ENCODE measurements at regions of chr7 and their contacts with region 1.

Region 1: GRCh38 chr7:20310963-20311742 is 19.5 kb upstream of the ITGB8 start:
- DNase-seq: no peak
- H3K4me3 ChIP-seq: no peak overlapping the region
- H3K27ac ChIP-seq: no peak overlapping the region
- H3K4me1 ChIP-seq: peaks cover 3% of the 10 kb centered on the region
- H3K27me3 ChIP-seq: no peaks in the 10 kb centered on the region
- CTCF ChIP-seq: peak; percentile 44

Region 2: GRCh38 chr7:19713676-19714075 is 597.5 kb before region 1 on chr7:
- intact Hi-C with region 1: loop called (anchors 10 kb)
- DNase-seq: no peak
- H3K4me3 ChIP-seq: no peak overlapping the region
- H3K27ac ChIP-seq: no peak overlapping the region
- H3K4me1 ChIP-seq: no peaks in the 10 kb centered on the region
- H3K27me3 ChIP-seq: no peaks in the 10 kb centered on the region
- CTCF ChIP-seq: peak; percentile 39

Region 3: DNA sequence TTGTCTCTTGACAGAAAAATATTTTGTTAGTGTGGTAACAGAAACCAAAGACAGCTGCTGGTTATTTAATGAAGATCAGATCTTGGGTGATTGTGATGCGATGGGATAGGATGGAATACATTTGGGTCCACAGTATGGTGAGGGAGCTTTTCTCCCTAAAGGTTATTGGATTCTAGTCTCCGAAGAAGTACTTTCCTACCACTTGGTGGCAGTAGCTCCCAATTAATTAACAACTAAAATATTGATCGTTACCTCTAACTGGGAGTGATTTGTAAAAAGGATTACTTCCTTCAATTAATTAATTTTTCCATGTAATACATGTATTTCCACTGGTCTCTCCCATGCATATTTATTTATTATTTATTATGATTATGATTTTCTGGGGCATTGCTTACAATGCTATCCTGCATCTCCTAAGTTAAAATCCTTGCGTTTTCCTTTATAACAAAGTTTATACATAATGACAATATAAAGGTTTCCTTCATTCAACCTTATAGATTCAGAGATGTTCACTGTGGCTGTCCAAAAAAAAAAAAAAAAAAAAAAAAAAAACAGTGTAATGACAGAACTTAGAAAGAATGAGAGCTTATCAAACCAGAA is 563.3 kb before region 1 on chr7:
- intact Hi-C with region 1: loop called (anchors 10 kb)
- DNase-seq: no peak
- H3K4me3 ChIP-seq: no peak overlapping the region
- H3K27ac ChIP-seq: no peak overlapping the region
- H3K4me1 ChIP-seq: no peaks in the 10 kb centered on the region
- H3K27me3 ChIP-seq: no peaks in the 10 kb centered on the region
- CTCF ChIP-seq: peak; percentile 20

Region 4: GRCh38 chr7:19982841-19983835 is 328.0 kb before region 1 on chr7:
- intact Hi-C with region 1: loop called (anchors 10 kb)
- DNase-seq: peak; percentile 51
- H3K4me3 ChIP-seq: no peak overlapping the region
- H3K27ac ChIP-seq: no peak overlapping the region
- H3K4me1 ChIP-seq: no peaks in the 10 kb centered on the region
- H3K27me3 ChIP-seq: no peaks in the 10 kb centered on the region
- CTCF ChIP-seq: no peak

Region 5: GRCh38 chr7:20438694-20439376 is 127.7 kb after region 1 on chr7:
- intact Hi-C with region 1: loop called (anchors 10 kb)
- DNase-seq: no peak
- H3K4me3 ChIP-seq: no peak overlapping the region
- H3K27ac ChIP-seq: no peak overlapping the region
- H3K4me1 ChIP-seq: no peaks in the 10 kb centered on the region
- H3K27me3 ChIP-seq: no peaks in the 10 kb centered on the region
- CTCF ChIP-seq: no peak